AG04449 (cell line): ENCODE measurements at regions of chr5 and their contacts with region 1.

Region 1: GRCh38 chr5:139787568-139788293 is 7.9 kb upstream of the PSD2 start:
- DNase-seq: no peak
- H3K4me3 ChIP-seq: peak overlapping the region; percentile 73
- CTCF ChIP-seq: peak; percentile 95

Region 2: GRCh38 chr5:139588962-139589361 is 198.8 kb before region 1 on chr5:
- CTCF ChIA-PET with region 1: no interaction called
- POLR2A ChIA-PET with region 1: no interaction called
- DNase-seq: no peak
- H3K4me3 ChIP-seq: no peak overlapping the region
- CTCF ChIP-seq: no peak

Region 3: GRCh38 chr5:139765409-139766217 is 22.1 kb before region 1 on chr5:
- CTCF ChIA-PET with region 1: interaction called, 26 read pairs
- POLR2A ChIA-PET with region 1: no interaction called
- DNase-seq: no peak
- H3K4me3 ChIP-seq: peak overlapping the region; percentile 72
- CTCF ChIP-seq: peak; percentile 87

Region 4: GRCh38 chr5:139808493-139809139 is 20.9 kb after region 1 on chr5:
- CTCF ChIA-PET with region 1: interaction called, 60 read pairs
- POLR2A ChIA-PET with region 1: no interaction called
- DNase-seq: no peak
- H3K4me3 ChIP-seq: no peak overlapping the region
- CTCF ChIP-seq: no peak

Region 5: GRCh38 chr5:139839232-139839815 is 51.6 kb after region 1 on chr5:
- CTCF ChIA-PET with region 1: interaction called, 129 read pairs
- POLR2A ChIA-PET with region 1: no interaction called
- DNase-seq: no peak
- H3K4me3 ChIP-seq: no peak overlapping the region
- CTCF ChIP-seq: no peak

Region 6: DNA sequence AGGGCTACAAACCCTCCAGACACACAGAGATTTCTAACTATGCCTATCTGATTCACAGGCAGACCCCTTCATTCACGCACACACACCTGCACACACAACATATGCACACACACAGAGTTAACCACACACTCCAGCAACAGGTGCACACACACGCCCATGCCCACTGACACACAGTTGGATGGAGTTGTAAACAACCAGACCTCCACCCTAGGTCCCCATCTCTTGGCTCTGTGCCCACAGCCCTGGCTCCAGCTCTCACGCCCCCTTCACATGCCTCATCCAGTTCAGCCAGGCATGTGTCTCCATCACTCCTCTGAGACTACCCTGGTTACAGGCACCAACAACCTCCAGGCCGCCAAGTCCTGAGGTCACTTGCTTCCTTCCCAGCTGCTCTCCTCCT is 69.0 kb after region 1 on chr5:
- CTCF ChIA-PET with region 1: interaction called, 144 read pairs
- POLR2A ChIA-PET with region 1: no interaction called
- DNase-seq: no peak
- H3K4me3 ChIP-seq: no peak overlapping the region
- CTCF ChIP-seq: no peak

Region 7: GRCh38 chr5:139968547-139969261 is 181.0 kb after region 1 on chr5:
- CTCF ChIA-PET with region 1: interaction called, 457 read pairs
- POLR2A ChIA-PET with region 1: interaction called, 3 read pairs
- DNase-seq: no peak
- H3K4me3 ChIP-seq: no peak overlapping the region
- CTCF ChIP-seq: peak; percentile 100

Region 8: GRCh38 chr5:140157032-140157803 is 369.5 kb after region 1 on chr5:
- CTCF ChIA-PET with region 1: interaction called, 25 read pairs
- POLR2A ChIA-PET with region 1: no interaction called
- DNase-seq: no peak
- H3K4me3 ChIP-seq: peak overlapping the region; percentile 38
- CTCF ChIP-seq: peak; percentile 94